Caco-2 (cell line): ENCODE measurements at regions of chr1 and their contacts with region 1.

Region 1: GRCh38 chr1:205321164-205321958 is at the start of gene NUAK2:
- DNase-seq: peak; percentile 97 to 99
- H3K4me3 ChIP-seq: peak within 1 kb of the TSS; percentile 93
- H3K4me3 Mint-ChIP-seq: peak within 1 kb of the TSS; percentile 96
- H3K27ac Mint-ChIP-seq: peak within 1 kb of the TSS; percentile 93
- H3K4me1 ChIP-seq: peaks cover 40% of the 10 kb centered on the region
- H3K4me1 Mint-ChIP-seq: peaks cover 52% of the 10 kb centered on the region
- H3K27me3 ChIP-seq: no peaks in the 10 kb centered on the region
- H3K27me3 Mint-ChIP-seq: no peaks in the 10 kb centered on the region
- CTCF ChIP-seq: peak in 1 of 2 experiments; percentile 24
- total RNA-seq, gene NUAK2: 25.7 and 27.0 TPM in 2 replicates

Region 2: GRCh38 chr1:205227584-205228006 is 93.8 kb before region 1 on chr1 and contains the start of gene TMCC2:
- CTCF ChIA-PET with region 1: interaction called, 8 read pairs
- POLR2A ChIA-PET with region 1: interaction called, 4 read pairs
- intact Hi-C with region 1: loop called (anchors 2 kb)
- DNase-seq: peak; percentile 85 to 87
- H3K4me3 ChIP-seq: peak within 1 kb of the TSS; percentile 66
- H3K4me3 Mint-ChIP-seq: peak within 1 kb of the TSS; percentile 83
- H3K27ac Mint-ChIP-seq: no peak within 1 kb of the TSS
- H3K4me1 ChIP-seq: no peaks in the 10 kb centered on the region
- H3K4me1 Mint-ChIP-seq: peaks cover 7% of the 10 kb centered on the region
- H3K27me3 ChIP-seq: no peaks in the 10 kb centered on the region; the same call in 1 of the 2 replicates
- H3K27me3 Mint-ChIP-seq: peaks cover 5% of the 10 kb centered on the region
- CTCF ChIP-seq: no peak
- total RNA-seq, gene TMCC2: 0.60 and 0.91 TPM in 2 replicates

Region 3: GRCh38 chr1:205249651-205250050 is 71.7 kb before region 1 on chr1:
- CTCF ChIA-PET with region 1: no interaction called
- POLR2A ChIA-PET with region 1: no interaction called
- intact Hi-C with region 1: no loop called
- DNase-seq: no peak
- H3K4me3 ChIP-seq: no peak overlapping the region
- H3K4me3 Mint-ChIP-seq: no peak overlapping the region
- H3K27ac Mint-ChIP-seq: no peak overlapping the region
- H3K4me1 ChIP-seq: no peaks in the 10 kb centered on the region
- H3K4me1 Mint-ChIP-seq: no peaks in the 10 kb centered on the region
- H3K27me3 ChIP-seq: no peaks in the 10 kb centered on the region
- H3K27me3 Mint-ChIP-seq: no peaks in the 10 kb centered on the region
- CTCF ChIP-seq: no peak

Region 4: GRCh38 chr1:205284343-205285144 is 36.8 kb before region 1 on chr1:
- CTCF ChIA-PET with region 1: interaction called, 30 read pairs
- POLR2A ChIA-PET with region 1: interaction called, 9 read pairs
- intact Hi-C with region 1: loop called (anchors 1 kb)
- DNase-seq: peak; percentile 95 to 98
- H3K4me3 ChIP-seq: no peak overlapping the region
- H3K4me3 Mint-ChIP-seq: peak overlapping the region; percentile 38
- H3K27ac Mint-ChIP-seq: peak overlapping the region; percentile 69
- H3K4me1 ChIP-seq: peaks cover 35% of the 10 kb centered on the region
- H3K4me1 Mint-ChIP-seq: peaks cover 41% of the 10 kb centered on the region
- H3K27me3 ChIP-seq: no peaks in the 10 kb centered on the region
- H3K27me3 Mint-ChIP-seq: no peaks in the 10 kb centered on the region
- CTCF ChIP-seq: peak in 1 of 2 experiments; percentile 28

Region 5: GRCh38 chr1:205300886-205301821 is 20.2 kb before region 1 on chr1:
- CTCF ChIA-PET with region 1: interaction called, 23 read pairs
- POLR2A ChIA-PET with region 1: interaction called, 33 read pairs
- intact Hi-C with region 1: loop called (anchors 1 kb)
- DNase-seq: peak; percentile 97 to 99
- H3K4me3 ChIP-seq: peak overlapping the region; percentile 5; the same call in 1 of the 2 replicates
- H3K4me3 Mint-ChIP-seq: peak overlapping the region; percentile 56
- H3K27ac Mint-ChIP-seq: peak overlapping the region; percentile 97
- H3K4me1 ChIP-seq: peaks cover 76% of the 10 kb centered on the region
- H3K4me1 Mint-ChIP-seq: peaks cover 58% of the 10 kb centered on the region
- H3K27me3 ChIP-seq: no peaks in the 10 kb centered on the region
- H3K27me3 Mint-ChIP-seq: no peaks in the 10 kb centered on the region
- CTCF ChIP-seq: no peak